Activated T-helper 2 cell treated with anti-CD3 and anti-CD28 coated beads, Interferon-gamma antibody, Interleukin-2, Interleukin-4, amounts not matched to agents 10 μg/mL and 5 μg/mL and 100 μg/mL, durations not matched to agents 14 hours and 24 hours and 36 hours (primary cell): ENCODE measurements at regions of chr10 and their contacts with region 1.

Region 1: DNA sequence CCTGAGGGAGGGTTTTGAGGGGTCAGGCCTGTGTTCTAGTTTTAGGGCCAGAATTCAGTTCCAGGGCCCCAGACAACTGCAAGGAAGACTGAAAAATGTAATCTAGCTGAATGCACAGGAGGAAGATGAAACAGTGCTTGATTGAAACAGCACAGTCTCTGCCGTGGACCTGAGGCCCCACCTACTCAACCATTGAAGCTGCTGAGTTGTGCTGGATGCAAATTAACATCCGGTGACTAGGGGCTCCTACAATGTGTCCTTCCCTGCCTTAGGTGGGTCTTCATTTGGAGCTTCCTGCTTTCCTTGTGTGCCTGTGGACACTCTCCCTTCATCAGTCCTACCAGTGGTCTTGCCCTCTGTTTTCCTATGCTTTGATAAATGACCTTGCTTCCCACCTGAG is 5.7 kb downstream of the GLRX3 start:
- DNase-seq: no peak
- H3K4me3 Mint-ChIP-seq: no peak overlapping the region
- H3K27ac Mint-ChIP-seq: peak overlapping the region; percentile 26
- H3K4me1 Mint-ChIP-seq: peaks cover 53% of the 10 kb centered on the region
- H3K27me3 Mint-ChIP-seq: no peaks in the 10 kb centered on the region

Region 2: GRCh38 chr10:129662426-129662825 is 479.5 kb before region 1 on chr10:
- intact Hi-C with region 1: no loop called
- DNase-seq: no peak
- H3K4me3 Mint-ChIP-seq: no peak overlapping the region
- H3K27ac Mint-ChIP-seq: no peak overlapping the region
- H3K4me1 Mint-ChIP-seq: no peaks in the 10 kb centered on the region
- H3K27me3 Mint-ChIP-seq: no peaks in the 10 kb centered on the region

Region 3: DNA sequence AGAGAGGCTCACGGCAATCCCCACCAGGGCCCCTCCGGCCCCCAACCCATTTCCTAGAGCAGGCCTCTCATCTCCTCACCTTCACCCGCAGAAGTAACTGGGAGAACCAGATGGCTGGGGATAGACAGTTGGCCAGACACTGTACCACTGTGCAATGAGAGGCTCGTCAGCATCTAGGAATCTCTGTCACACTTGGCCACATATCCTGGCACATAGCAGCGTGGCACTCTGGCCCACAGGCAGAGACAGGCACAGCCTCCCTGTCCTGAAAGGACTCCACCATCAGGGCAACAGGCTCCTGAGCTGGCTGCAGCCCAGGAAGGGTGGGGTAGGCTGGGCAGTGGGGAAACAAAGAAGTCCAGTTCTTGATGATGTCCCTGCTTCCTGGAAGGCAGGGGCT is 77.1 kb before region 1 on chr10:
- intact Hi-C with region 1: no loop called
- DNase-seq: no peak
- H3K4me3 Mint-ChIP-seq: no peak overlapping the region
- H3K27ac Mint-ChIP-seq: no peak overlapping the region
- H3K4me1 Mint-ChIP-seq: no peaks in the 10 kb centered on the region
- H3K27me3 Mint-ChIP-seq: no peaks in the 10 kb centered on the region

Region 4: DNA sequence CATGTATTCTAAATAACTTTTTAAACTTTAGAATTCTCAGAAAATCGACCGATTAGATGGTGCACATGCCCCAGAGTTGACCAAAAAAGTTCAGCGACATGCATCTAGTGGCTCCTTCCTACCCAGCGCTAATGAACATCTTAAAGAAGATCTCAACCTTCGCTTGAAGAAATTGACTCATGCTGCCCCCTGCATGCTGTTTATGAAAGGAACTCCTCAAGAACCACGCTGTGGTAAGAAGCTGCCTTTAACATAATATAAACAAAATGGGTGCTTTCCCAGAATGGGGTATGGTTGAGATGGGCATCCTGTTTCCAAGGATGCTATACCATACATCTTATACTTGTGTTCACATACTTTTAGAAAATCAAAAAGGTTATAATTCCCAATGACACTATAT is 18.9 kb after region 1 on chr10:
- intact Hi-C with region 1: loop called (anchors 2 kb)
- DNase-seq: no peak
- H3K4me3 Mint-ChIP-seq: no peak overlapping the region
- H3K27ac Mint-ChIP-seq: no peak overlapping the region
- H3K4me1 Mint-ChIP-seq: peaks cover 36% of the 10 kb centered on the region
- H3K27me3 Mint-ChIP-seq: no peaks in the 10 kb centered on the region

Region 5: GRCh38 chr10:130202984-130203621 is 61.2 kb after region 1 on chr10:
- intact Hi-C with region 1: no loop called
- DNase-seq: no peak
- H3K4me3 Mint-ChIP-seq: no peak overlapping the region
- H3K27ac Mint-ChIP-seq: no peak overlapping the region
- H3K4me1 Mint-ChIP-seq: no peaks in the 10 kb centered on the region
- H3K27me3 Mint-ChIP-seq: no peaks in the 10 kb centered on the region